A549 (cell line): ENCODE measurements at regions of chrX and their contacts with region 1.

Region 1: GRCh38 chrX:72126539-72127140 is 5.1 kb downstream of the RTL5 start:
- DNase-seq: peak; percentile 71 to 76
- ATAC-seq: peak; percentile 81 to 93
- H3K4me3 ChIP-seq: no peak overlapping the region
- H3K27ac ChIP-seq: peak overlapping the region; percentile 63 to 79
- H3K4me1 ChIP-seq: peaks cover 11% of the 10 kb centered on the region
- CTCF ChIP-seq: peak; percentile 73
- EP300 ChIP-seq: no peak
- POLR2A ChIP-seq: no peak
- RAD21 ChIP-seq: peak; percentile 84 to 86

Region 2: DNA sequence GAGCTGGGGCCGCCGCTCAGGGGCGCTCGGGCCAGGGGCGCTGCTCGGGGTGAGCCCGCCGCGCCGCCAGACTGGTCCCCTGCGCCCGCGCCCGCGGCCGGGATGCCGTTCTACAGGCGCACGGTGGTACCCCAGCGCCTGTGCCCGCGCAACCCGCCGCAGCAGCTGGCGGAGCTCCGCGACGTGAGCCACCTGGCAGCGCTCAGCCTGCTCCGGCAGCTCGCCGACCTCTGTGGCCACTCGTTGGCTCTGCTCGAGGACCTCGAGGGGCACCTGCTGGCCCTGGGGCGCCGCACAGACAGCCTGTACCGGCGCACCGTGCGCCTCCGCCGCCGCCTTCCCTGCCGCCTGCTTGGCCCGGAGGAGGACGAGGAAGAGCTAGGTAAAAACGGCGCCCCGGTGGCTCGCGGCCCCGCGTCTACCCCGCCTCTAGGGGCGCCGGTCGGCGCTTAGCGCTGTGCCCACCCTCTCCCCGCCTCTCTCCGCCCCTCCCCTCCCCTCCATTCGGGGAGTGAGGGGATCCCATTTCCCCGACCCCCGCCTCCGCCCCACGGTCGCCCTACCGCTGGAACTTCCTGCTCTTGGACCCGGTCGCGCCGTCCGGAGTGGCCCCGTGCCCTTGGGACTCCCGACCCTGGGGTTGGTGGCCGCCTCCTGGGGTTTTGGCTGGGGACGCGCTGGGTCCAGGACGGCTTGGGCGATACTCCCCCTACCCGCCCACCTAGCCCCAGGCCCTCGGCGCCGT is 215.5 kb before region 1 on chrX:
- CTCF ChIA-PET with region 1: interaction called, 37 read pairs
- POLR2A ChIA-PET with region 1: no interaction called
- DNase-seq: peak; percentile 42 to 64
- ATAC-seq: peak; percentile 83 to 93
- H3K4me3 ChIP-seq: peak overlapping the region; percentile 57
- H3K27ac ChIP-seq: peak overlapping the region; percentile 62 to 89; a peak in 4 of 6 replicates
- H3K4me1 ChIP-seq: 0 out of 3 replicates have a peak, but pooled peaks cover 4% of the 10 kb centered on the region
- CTCF ChIP-seq: peak; percentile 43
- EP300 ChIP-seq: no peak
- POLR2A ChIP-seq: no peak; the same call in none of the 2 replicates
- RAD21 ChIP-seq: no peak

Region 3: GRCh38 chrX:72018277-72019112 is 108.1 kb before region 1 on chrX:
- CTCF ChIA-PET with region 1: interaction called, 109 read pairs
- POLR2A ChIA-PET with region 1: interaction called, 7 read pairs
- DNase-seq: peak; percentile 81 to 84
- ATAC-seq: peak; percentile 97
- H3K4me3 ChIP-seq: peak overlapping the region; percentile 33; the same call in 2 of the 3 replicates
- H3K27ac ChIP-seq: peak overlapping the region; percentile 70 to 90
- H3K4me1 ChIP-seq: 0 out of 3 replicates have a peak, but pooled peaks cover 4% of the 10 kb centered on the region
- CTCF ChIP-seq: peak; percentile 88
- EP300 ChIP-seq: no peak
- POLR2A ChIP-seq: no peak
- RAD21 ChIP-seq: peak; percentile 49 to 81; a peak in 4 of 5 replicates

Region 4: DNA sequence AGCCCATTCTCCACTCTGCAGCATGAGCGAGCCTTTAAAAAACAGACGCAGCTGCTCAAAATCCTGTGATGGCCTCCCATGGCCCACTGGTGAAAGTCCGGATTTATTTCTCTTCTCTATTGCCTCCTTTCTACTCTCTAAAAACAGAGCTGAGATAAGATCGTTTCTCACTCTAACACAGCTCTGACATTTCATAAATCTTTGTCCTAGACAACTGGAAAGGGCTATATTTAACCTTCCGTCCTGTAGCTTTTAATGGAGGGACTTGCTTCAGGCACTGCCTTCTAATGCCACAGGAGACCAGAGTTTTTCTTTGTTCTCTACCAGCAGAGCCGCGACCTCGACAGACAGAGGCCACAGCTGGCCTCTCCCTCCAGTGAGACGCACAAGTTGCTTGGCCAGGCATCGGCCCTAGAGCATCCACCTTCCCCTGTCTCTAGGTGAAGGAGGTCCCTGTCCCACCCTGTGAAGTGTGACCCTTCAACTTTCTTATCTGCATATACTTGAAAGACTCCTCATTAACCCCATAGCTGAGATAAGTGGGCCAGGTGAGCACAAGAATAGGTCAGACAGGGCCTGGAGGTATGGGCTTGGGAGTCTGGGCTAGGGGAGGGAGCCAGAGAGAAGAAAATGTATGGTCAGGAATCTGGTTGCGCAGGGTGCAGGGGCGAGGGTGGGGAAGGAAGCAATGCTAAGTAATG is 44.9 kb before region 1 on chrX:
- CTCF ChIA-PET with region 1: interaction called, 10 read pairs
- POLR2A ChIA-PET with region 1: no interaction called
- DNase-seq: no peak
- ATAC-seq: no peak
- H3K4me3 ChIP-seq: no peak overlapping the region
- H3K27ac ChIP-seq: no peak overlapping the region
- H3K4me1 ChIP-seq: no peaks in the 10 kb centered on the region
- CTCF ChIP-seq: no peak
- EP300 ChIP-seq: no peak
- POLR2A ChIP-seq: no peak
- RAD21 ChIP-seq: no peak

Region 5: DNA sequence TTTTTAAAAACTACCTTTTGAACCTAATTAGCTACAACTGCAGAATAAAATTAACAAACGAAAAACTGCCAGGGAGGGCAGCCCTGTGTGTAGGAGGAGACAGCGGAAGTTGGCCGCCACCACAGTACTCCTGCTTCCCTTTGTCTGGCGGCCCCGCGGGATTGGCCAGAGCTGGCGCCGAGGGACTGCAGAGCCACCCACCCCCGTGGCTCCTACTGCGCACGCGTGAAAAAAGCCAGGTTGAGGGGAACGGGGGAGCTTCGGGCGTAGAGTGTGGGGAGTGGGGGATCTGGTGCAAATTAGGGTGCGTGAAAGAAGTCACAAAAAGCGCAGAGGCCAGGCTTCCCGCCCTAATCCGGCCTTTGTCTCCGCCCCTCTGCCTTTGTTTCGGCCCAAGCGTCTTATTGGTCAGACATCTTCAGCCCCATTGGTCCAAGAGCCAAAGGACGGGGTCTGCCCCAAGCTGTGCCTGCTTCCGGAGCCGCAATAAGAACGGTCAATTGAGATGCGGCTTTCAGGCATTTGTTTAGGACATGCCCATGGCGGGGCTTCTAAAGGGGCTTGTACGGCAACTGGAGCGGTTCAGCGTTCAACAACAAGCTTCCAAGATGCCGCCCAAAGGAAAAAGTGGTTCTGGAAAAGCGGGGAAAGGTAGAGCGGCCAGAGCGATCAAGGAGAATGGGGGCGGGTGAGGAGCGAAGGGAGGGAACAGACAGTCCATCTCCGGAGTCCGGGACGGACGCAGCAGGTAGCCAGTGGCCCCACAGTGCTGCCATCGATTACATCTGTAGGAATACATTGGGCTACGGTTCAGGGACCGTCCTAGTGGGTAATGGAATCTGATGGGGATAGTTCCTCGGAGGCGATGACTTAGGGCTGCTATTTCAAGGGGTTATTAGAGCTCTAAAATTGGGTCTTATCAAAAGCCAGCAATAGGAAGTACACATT is 54.8 kb after region 1 on chrX and contains the start of gene PIN4:
- CTCF ChIA-PET with region 1: no interaction called
- POLR2A ChIA-PET with region 1: interaction called, 22 read pairs
- DNase-seq: peak; percentile 84 to 98
- ATAC-seq: peak; percentile 97 to 99
- H3K4me3 ChIP-seq: peak within 1 kb of the TSS; percentile 88
- H3K27ac ChIP-seq: peak within 1 kb of the TSS; percentile 82 to 90
- H3K4me1 ChIP-seq: peaks cover 10% of the 10 kb centered on the region
- CTCF ChIP-seq: no peak
- EP300 ChIP-seq: no peak
- POLR2A ChIP-seq: peak; percentile 57
- RAD21 ChIP-seq: peak in 1 of 2 experiments; percentile 2; a peak in 1 of 5 replicates
- polyA plus RNA-seq, gene PIN4: 24.0 and 43.4 TPM in 2 replicates

Region 6: GRCh38 chrX:72245461-72246089 is 118.9 kb after region 1 on chrX:
- CTCF ChIA-PET with region 1: no interaction called
- POLR2A ChIA-PET with region 1: no interaction called
- DNase-seq: peak; percentile 60 to 74
- ATAC-seq: peak; percentile 80 to 94
- H3K4me3 ChIP-seq: no peak overlapping the region
- H3K27ac ChIP-seq: no peak overlapping the region
- H3K4me1 ChIP-seq: peaks cover 9% of the 10 kb centered on the region; the same call in 2 of the 3 replicates
- CTCF ChIP-seq: peak; percentile 64
- EP300 ChIP-seq: no peak
- POLR2A ChIP-seq: no peak
- RAD21 ChIP-seq: peak; percentile 78 to 80